Posterior vena cava (tissue), 2 donors: ENCODE measurements at regions of chr4 and their contacts with region 1.

Region 1: DNA sequence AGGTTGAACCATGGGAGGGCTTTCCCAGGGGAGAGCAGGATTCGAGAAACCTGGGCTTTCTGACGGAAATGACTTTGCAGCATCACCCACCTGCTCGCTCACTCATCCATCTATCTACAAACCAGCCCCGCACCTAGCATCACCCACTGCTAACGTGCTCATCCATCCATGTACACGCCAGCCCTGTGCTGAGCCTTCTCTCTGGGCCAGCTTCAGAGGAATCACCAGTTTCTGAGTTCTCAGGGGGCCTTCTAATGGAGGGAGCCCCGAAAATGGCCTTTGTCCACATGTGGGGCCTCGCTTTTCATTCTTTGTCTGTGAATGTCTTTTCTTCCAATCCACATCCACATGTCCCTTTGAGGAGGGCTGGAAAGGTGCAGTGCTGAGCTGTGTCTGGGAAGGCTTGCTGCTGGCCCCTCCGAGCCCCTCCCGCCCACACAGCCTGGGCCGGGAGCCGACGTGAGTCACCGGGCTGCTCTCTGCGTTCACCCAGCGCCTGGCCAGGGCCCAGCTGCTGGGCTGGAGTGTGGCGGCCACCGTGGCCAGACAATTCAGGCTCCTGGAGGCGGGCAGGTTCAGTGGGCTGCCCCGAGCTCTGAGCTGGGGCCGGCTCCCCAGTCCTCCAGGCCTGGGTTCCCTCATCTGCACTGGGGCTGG is 14.7 kb downstream of the SORCS2 start:
- DNase-seq: peak; percentile 96

Region 2: DNA sequence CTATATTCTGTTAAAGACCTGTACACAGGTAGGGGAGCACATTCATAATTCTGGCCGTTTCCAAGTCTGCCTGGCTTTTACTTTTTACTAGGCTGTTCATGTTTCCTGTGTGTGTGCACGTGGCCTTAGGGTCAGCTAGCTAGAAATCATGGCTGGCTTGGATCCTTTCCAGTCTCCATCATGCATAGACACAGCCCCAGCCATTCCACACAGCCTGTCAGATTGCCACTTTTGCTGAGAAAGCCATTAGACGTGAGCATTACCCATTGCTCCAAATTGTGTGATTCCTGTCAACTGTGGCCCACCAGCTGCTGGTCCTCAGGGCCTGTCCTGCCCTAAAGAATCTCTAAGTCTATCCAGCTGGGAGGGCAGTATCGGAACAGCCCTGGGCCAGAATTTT is 26.1 kb before region 1 on chr4:
- intact Hi-C with region 1: loop called in 1 of 2 experiments (anchors 1 kb)
- DNase-seq: no peak

Region 3: DNA sequence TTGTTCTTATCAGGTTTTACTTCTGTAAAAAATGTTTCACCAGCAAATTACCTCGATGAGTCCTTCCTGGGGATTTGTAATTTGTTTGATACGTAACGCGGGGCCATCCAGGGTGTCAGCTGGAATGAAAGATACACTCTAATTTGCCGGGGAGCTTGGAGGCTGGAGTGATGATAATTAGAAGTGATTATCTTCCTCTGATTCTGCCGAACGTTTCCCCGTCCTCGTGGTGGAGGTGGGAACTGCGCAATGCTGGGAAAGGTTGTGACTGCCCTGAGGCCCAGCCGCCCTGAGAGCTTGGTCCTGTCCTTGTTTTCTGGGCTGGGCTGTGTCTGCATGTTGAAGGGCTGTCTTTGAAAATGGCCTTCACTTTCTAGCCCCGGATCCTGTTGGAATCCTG is 33.3 kb after region 1 on chr4:
- intact Hi-C with region 1: loop called in 1 of 2 experiments (anchors 5 kb)
- DNase-seq: no peak

Region 4: GRCh38 chr4:7252510-7253340 is 45.7 kb after region 1 on chr4:
- intact Hi-C with region 1: loop called in 1 of 2 experiments (anchors 2 kb)
- DNase-seq: no peak